Posterior vena cava (tissue), 2 donors: ENCODE measurements at regions of chr15 and their contacts with region 1.

Region 1: DNA sequence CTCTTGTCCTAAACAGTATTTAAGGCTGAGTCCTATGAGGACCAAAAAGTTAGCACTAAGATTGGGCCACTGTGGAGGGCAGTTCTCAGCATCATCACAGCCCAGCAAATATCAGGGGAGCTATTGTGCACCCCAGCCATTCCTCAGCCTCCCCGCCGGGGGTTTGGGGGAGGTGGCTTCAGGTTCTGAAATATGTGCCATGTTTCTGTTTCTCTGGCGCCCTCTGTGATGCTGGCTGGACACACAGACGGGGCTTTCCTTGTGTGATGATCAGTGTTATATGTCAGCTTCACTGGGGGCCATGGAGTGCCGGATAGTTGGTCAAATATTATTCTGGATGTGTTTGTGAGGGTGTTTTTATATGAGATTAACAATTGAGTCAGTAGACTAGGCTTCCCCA is 106.8 kb downstream of the GABRG3 start:
- DNase-seq: no peak

Region 2: DNA sequence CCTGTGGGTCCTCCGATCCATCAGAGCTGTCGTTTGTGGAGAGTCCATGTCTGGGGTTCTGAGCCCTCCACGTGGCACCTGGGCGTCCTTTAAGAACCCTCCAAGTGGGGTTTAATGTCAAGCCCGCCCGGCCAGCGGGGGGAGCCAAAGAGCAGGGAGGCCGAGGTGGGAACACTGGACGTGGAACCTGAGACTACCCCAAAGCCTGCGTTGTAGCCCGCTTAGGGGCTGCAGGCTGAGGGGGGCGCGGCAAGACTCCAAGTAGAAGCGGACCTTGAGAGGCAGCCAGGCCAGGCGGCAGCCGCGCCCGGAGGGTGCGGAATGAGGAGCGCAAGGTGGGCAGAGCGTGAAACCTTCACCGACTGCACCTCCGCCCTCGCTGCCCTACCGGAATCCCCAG is 1088.5 kb before region 1 on chr15:
- intact Hi-C with region 1: no loop called
- DNase-seq: no peak

Region 3: GRCh38 chr15:27045796-27046195 is 32.0 kb before region 1 on chr15:
- intact Hi-C with region 1: loop called in 1 of 2 experiments (anchors 1 kb)
- DNase-seq: no peak

Region 4: GRCh38 chr15:27165583-27165982 is 87.8 kb after region 1 on chr15:
- intact Hi-C with region 1: no loop called
- DNase-seq: no peak